MCF 10A (cell line): ENCODE measurements at regions of chr17 and their contacts with region 1.

Region 1: DNA sequence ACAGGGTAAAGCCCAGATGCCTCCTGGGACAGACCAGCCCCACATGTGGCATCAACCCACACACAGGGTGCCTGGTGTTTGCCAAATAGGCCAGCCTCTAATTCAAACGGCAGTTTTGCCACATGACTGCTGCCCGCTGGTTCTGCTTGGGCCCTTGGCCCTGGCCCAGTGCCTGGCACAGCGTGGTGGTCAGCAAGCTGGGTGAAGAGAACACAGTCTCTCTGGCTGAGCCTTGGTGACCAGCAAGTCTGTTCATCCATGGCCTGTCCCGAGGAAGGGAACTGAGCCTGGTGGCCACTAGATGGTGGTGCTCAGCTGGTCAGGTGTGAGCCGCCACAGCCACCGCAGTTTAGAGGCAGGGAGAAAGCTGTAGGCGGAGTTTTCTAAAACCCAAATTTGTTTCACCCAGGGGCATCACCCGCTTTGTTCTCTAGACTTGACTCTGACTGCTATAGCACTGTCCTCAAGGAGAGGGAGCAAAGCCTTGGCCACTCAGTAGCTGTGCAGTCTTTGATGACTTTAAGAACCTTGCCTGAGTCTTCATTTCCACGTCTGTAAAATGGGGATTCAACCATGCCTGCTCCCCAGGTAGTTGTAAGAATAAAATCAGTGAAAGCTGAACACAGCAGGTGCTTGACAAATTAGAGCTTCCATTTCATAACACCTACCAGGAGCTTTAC is 4.7 kb upstream of the GFAP start:
- DNase-seq: peak; percentile 85
- H3K4me3 Mint-ChIP-seq: no peak overlapping the region
- H3K27ac Mint-ChIP-seq: no peak overlapping the region
- H3K4me1 Mint-ChIP-seq: peaks cover 19% of the 10 kb centered on the region
- H3K27me3 Mint-ChIP-seq: no peaks in the 10 kb centered on the region
- CTCF ChIP-seq: peak; percentile 81

Region 2: GRCh38 chr17:44899069-44899782 is 20.8 kb before region 1 on chr17 and contains the start of gene EFTUD2:
- CTCF ChIA-PET with region 1: interaction called, 29 read pairs
- POLR2A ChIA-PET with region 1: interaction called, 12 read pairs
- intact Hi-C with region 1: no loop called
- DNase-seq: peak; percentile 87
- H3K4me3 Mint-ChIP-seq: peak within 1 kb of the TSS; percentile 80
- H3K27ac Mint-ChIP-seq: peak within 1 kb of the TSS; percentile 99
- H3K4me1 Mint-ChIP-seq: peaks cover 21% of the 10 kb centered on the region
- H3K27me3 Mint-ChIP-seq: no peaks in the 10 kb centered on the region
- CTCF ChIP-seq: no peak
- total RNA-seq, gene EFTUD2: 119 and 125 TPM in 2 replicates

Region 3: GRCh38 chr17:44941712-44942331 is 21.8 kb after region 1 on chr17:
- CTCF ChIA-PET with region 1: interaction called, 11 read pairs
- POLR2A ChIA-PET with region 1: interaction called, 7 read pairs
- intact Hi-C with region 1: no loop called
- DNase-seq: no peak
- H3K4me3 Mint-ChIP-seq: no peak overlapping the region
- H3K27ac Mint-ChIP-seq: peak overlapping the region; percentile 77
- H3K4me1 Mint-ChIP-seq: peaks cover 19% of the 10 kb centered on the region
- H3K27me3 Mint-ChIP-seq: no peaks in the 10 kb centered on the region
- CTCF ChIP-seq: no peak

Region 4: GRCh38 chr17:45006927-45007461 is 87.0 kb after region 1 on chr17:
- CTCF ChIA-PET with region 1: interaction called, 16 read pairs
- POLR2A ChIA-PET with region 1: no interaction called
- intact Hi-C with region 1: loop called (anchors 1 kb)
- DNase-seq: peak; percentile 27
- H3K4me3 Mint-ChIP-seq: no peak overlapping the region
- H3K27ac Mint-ChIP-seq: no peak overlapping the region
- H3K4me1 Mint-ChIP-seq: no peaks in the 10 kb centered on the region
- H3K27me3 Mint-ChIP-seq: no peaks in the 10 kb centered on the region
- CTCF ChIP-seq: peak; percentile 5

Region 5: GRCh38 chr17:45051060-45051719 is 131.2 kb after region 1 on chr17 and contains the start of gene DCAKD:
- CTCF ChIA-PET with region 1: interaction called, 14 read pairs
- POLR2A ChIA-PET with region 1: interaction called, 3 read pairs
- intact Hi-C with region 1: no loop called
- DNase-seq: peak; percentile 95
- H3K4me3 Mint-ChIP-seq: peak within 1 kb of the TSS; percentile 75
- H3K27ac Mint-ChIP-seq: peak within 1 kb of the TSS; percentile 77
- H3K4me1 Mint-ChIP-seq: peaks cover 16% of the 10 kb centered on the region
- H3K27me3 Mint-ChIP-seq: no peaks in the 10 kb centered on the region
- CTCF ChIP-seq: no peak
- total RNA-seq, gene DCAKD: 23.1 and 23.3 TPM in 2 replicates